ENCODE measurements at regions of chr2 and their contacts with region 1.

Region 1: DNA sequence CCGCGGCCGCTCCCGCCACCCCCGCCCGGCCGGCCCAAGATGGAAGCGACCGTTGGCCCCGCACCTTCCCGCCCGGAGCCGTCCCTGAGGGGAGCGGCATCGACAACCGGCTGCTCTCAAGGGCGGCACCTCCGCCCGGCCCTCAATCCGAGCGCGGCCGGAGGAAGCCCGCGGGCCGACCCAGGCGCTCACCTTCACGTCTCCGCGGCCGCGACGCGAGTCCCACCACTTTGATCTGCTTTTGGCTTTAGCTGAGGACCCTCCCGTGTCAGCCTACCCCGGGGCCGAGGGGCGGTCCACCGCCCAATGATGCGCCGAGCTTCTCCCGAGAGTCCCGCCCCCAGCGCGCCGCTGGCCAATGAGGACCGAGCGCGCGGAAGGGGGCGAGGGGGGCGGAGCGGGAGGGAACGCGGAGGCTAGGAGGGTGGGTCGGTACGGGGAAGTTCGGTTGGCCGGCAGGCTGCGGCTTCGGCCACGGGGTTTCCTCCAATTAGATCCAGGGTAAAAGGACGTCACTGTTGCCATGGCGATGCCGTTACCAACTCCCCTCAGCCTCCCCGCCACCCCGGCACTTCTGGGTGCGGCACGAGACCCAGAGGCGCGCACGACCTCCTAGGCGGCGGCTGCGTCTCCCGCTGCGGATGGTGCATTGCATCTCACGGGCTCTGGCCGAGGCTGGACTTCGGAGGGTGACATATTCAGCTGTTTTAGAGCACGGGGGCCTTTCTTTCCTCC is at the start of gene YWHAQ:
- DNase-seq: peak; percentile 99
- ATAC-seq: peak; percentile 92
- H3K4me3 Mint-ChIP-seq: peak within 1 kb of the TSS; percentile 92
- H3K27ac Mint-ChIP-seq: peak within 1 kb of the TSS; percentile 89
- H3K4me1 Mint-ChIP-seq: peaks cover 52% of the 10 kb centered on the region
- H3K27me3 Mint-ChIP-seq: no peaks in the 10 kb centered on the region
- CTCF ChIP-seq: no peak
- total RNA-seq, gene YWHAQ: 164 and 166 TPM in 2 replicates

Region 2: DNA sequence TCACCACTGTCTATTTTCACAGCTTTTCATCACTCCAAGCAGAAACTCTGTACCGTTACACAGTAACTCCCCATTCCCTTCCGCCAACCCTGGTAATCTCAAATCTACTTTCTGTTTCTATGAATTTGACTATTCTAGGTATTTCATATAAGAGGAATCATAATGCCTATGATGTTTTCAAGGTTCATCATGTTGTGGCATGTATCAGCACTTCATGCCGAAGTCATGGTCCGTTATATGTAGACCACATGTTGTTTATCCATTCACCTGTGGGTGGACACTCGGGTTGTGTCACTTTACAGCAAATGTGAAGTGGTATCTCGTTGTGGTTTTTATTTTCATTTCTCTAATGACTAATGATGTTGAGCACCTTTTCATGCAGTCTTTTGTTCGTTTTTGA is 185.8 kb before region 1 on chr2:
- CTCF ChIA-PET with region 1: no interaction called
- POLR2A ChIA-PET with region 1: interaction called, 10 read pairs
- intact Hi-C with region 1: no loop called
- DNase-seq: no peak
- ATAC-seq: no peak
- H3K4me3 Mint-ChIP-seq: no peak overlapping the region
- H3K27ac Mint-ChIP-seq: no peak overlapping the region
- H3K4me1 Mint-ChIP-seq: no peaks in the 10 kb centered on the region
- H3K27me3 Mint-ChIP-seq: no peaks in the 10 kb centered on the region
- CTCF ChIP-seq: no peak

Region 3: GRCh38 chr2:9548506-9548905 is 82.4 kb before region 1 on chr2:
- CTCF ChIA-PET with region 1: no interaction called
- POLR2A ChIA-PET with region 1: interaction called, 14 read pairs
- intact Hi-C with region 1: no loop called
- DNase-seq: no peak
- ATAC-seq: peak; percentile 56
- H3K4me3 Mint-ChIP-seq: peak overlapping the region; percentile 86
- H3K27ac Mint-ChIP-seq: peak overlapping the region; percentile 96
- H3K4me1 Mint-ChIP-seq: peaks cover 85% of the 10 kb centered on the region
- H3K27me3 Mint-ChIP-seq: no peaks in the 10 kb centered on the region
- CTCF ChIP-seq: no peak

Region 4: DNA sequence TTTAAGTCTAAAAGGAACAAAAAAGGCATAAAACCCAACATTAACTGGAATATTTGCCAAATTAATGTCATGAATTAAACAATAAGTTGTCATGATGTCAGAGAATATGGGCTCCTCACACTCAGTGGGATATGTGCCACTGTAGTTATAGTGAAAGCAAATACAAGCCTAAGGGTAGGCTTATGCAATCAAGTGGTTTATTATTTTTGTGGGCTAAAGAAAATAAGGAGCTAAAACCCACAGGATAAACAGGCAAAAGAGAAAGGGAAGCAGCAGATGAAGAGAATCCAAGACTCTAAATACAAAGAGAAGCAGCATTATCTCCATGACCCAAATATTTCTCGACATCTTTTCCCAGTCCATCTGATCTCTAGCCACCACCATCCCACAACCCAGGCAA is 17.6 kb before region 1 on chr2:
- CTCF ChIA-PET with region 1: no interaction called
- POLR2A ChIA-PET with region 1: interaction called, 46 read pairs
- intact Hi-C with region 1: loop called (anchors 1 kb)
- DNase-seq: no peak
- ATAC-seq: no peak
- H3K4me3 Mint-ChIP-seq: no peak overlapping the region
- H3K27ac Mint-ChIP-seq: no peak overlapping the region
- H3K4me1 Mint-ChIP-seq: peaks cover 78% of the 10 kb centered on the region
- H3K27me3 Mint-ChIP-seq: no peaks in the 10 kb centered on the region
- CTCF ChIP-seq: no peak

Region 5: DNA sequence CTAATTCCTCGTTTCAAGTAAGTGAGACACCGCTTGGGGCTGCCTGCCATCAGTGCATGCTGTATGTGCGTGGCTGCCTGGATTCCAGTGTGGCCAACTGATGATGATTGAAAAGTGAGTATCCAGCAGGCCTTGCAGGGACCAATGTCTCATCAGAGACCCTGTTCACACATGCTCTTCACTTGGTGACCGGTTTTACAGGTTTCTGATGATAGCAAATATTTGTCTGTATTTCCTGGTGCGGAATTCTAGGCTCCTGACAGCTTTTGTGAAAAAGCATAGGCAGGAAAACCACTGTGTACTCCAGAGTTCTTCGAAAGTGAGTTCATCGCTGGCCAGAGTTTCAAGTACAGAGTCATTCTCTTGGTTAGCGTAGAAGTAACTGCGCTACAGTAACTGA is 13.7 kb after region 1 on chr2:
- CTCF ChIA-PET with region 1: no interaction called
- POLR2A ChIA-PET with region 1: no interaction called
- intact Hi-C with region 1: no loop called
- DNase-seq: no peak
- ATAC-seq: no peak
- H3K4me3 Mint-ChIP-seq: no peak overlapping the region
- H3K27ac Mint-ChIP-seq: no peak overlapping the region
- H3K4me1 Mint-ChIP-seq: peaks cover 19% of the 10 kb centered on the region
- H3K27me3 Mint-ChIP-seq: peaks cover 20% of the 10 kb centered on the region
- CTCF ChIP-seq: no peak

Region 6: GRCh38 chr2:9799665-9800632 is 169.0 kb after region 1 on chr2:
- CTCF ChIA-PET with region 1: no interaction called
- POLR2A ChIA-PET with region 1: no interaction called
- intact Hi-C with region 1: no loop called
- DNase-seq: peak; percentile 82
- ATAC-seq: peak; percentile 97
- H3K4me3 Mint-ChIP-seq: peak overlapping the region; percentile 50
- H3K27ac Mint-ChIP-seq: peak overlapping the region; percentile 42
- H3K4me1 Mint-ChIP-seq: peaks cover 20% of the 10 kb centered on the region
- H3K27me3 Mint-ChIP-seq: peaks cover 3% of the 10 kb centered on the region
- CTCF ChIP-seq: peak; percentile 65

Region 7: GRCh38 chr2:10043906-10044601 is 413.1 kb after region 1 on chr2:
- CTCF ChIA-PET with region 1: no interaction called
- POLR2A ChIA-PET with region 1: no interaction called
- intact Hi-C with region 1: loop called (anchors 2 kb)
- DNase-seq: peak; percentile 88
- ATAC-seq: peak; percentile 68
- H3K4me3 Mint-ChIP-seq: peak overlapping the region; percentile 76
- H3K27ac Mint-ChIP-seq: peak overlapping the region; percentile 72
- H3K4me1 Mint-ChIP-seq: peaks cover 26% of the 10 kb centered on the region
- H3K27me3 Mint-ChIP-seq: no peaks in the 10 kb centered on the region
- CTCF ChIP-seq: no peak

Measured in activated B cell treated with CpG ODN at 0.5 μM for 24 hours (primary cell).